GM12878 (cell line): ENCODE measurements at regions of chr7 and their contacts with region 1.

Region 1: GRCh38 chr7:641269-641671 is 85.2 kb upstream of the DNAAF5 start:
- DNase-seq: no peak
- ATAC-seq: no peak
- H3K4me3 ChIP-seq: no peak overlapping the region
- H3K27ac ChIP-seq: no peak overlapping the region
- H3K4me1 ChIP-seq: no peaks in the 10 kb centered on the region
- H3K27me3 ChIP-seq: no peaks in the 10 kb centered on the region
- CTCF ChIP-seq: no peak
- EP300 ChIP-seq: no peak
- POLR2A ChIP-seq: no peak
- RAD21 ChIP-seq: no peak

Region 2: GRCh38 chr7:749140-749551 is 107.9 kb after region 1 on chr7:
- CTCF ChIA-PET with region 1: no interaction called
- POLR2A ChIA-PET with region 1: interaction called, 12 read pairs
- RAD21 ChIA-PET with region 1: no interaction called
- SMC1A ChIA-PET with region 1: no interaction called
- in situ Hi-C with region 1: no loop called
- intact Hi-C with region 1: no loop called
- DNase-seq: no peak
- ATAC-seq: no peak
- H3K4me3 ChIP-seq: no peak overlapping the region
- H3K27ac ChIP-seq: no peak overlapping the region
- H3K4me1 ChIP-seq: no peaks in the 10 kb centered on the region
- H3K27me3 ChIP-seq: no peaks in the 10 kb centered on the region
- CTCF ChIP-seq: no peak
- EP300 ChIP-seq: no peak
- POLR2A ChIP-seq: no peak
- RAD21 ChIP-seq: no peak

Region 3: DNA sequence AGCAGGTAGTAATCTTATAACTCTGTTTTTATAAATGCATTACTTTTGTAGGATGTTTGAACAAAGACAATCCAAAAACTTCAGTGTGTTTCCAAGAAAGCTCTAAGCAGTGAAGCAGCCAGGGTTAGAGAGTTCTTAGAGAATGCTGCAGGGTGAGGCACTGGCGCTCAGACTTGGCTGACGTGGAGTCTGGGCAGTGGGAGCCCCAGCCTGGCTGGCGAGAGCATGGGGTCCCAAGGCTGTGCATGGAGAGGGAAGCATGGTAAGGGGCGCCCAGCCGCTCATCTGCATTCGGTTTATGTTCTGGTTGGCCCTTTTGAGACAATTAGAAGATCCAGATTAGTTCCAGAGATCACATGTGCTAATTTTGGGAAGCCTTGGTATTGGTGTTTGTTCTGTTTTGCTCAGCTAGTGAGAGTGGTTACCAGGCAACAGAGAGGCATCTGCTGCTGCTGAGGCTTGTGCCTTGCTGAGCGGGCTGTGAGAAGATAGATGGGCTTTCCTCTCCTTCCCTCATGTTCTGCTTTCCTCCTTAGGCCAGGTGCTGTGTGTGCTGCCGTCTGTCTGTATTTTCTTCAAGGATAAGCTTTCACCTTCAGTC is 201.3 kb after region 1 on chr7:
- CTCF ChIA-PET with region 1: no interaction called
- POLR2A ChIA-PET with region 1: no interaction called
- RAD21 ChIA-PET with region 1: no interaction called
- SMC1A ChIA-PET with region 1: no interaction called
- in situ Hi-C with region 1: no loop called
- intact Hi-C with region 1: no loop called
- DNase-seq: no peak
- ATAC-seq: no peak
- H3K4me3 ChIP-seq: no peak overlapping the region
- H3K27ac ChIP-seq: no peak overlapping the region
- H3K4me1 ChIP-seq: no peaks in the 10 kb centered on the region
- H3K27me3 ChIP-seq: no peaks in the 10 kb centered on the region
- CTCF ChIP-seq: no peak
- EP300 ChIP-seq: no peak
- POLR2A ChIP-seq: no peak
- RAD21 ChIP-seq: no peak